GM12878 (cell line): ENCODE measurements at regions of chr11 and their contacts with region 1.

Region 1: DNA sequence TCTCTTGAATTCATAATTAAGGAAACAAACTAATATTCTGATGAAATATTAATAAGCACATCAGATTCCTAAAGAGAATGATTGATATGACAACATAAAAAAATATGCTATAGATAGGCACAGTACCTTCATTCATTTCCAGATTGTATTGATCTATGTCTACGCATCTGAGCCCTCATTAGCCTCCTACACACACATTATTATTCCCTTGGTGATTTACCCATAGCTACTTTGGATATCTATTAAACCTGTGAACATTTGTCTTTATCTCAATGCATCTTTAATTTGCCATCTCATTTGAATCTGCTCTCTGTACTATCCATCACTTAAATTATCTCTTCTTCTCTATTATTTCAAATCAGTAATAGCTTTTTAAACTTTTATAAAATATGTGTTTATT is 18.4 kb downstream of the SESN3 start:
- DNase-seq: no peak
- ATAC-seq: no peak
- H3K4me3 ChIP-seq: no peak overlapping the region
- H3K27ac ChIP-seq: no peak overlapping the region
- H3K4me1 ChIP-seq: no peaks in the 10 kb centered on the region
- H3K27me3 ChIP-seq: no peaks in the 10 kb centered on the region
- CTCF ChIP-seq: no peak
- EP300 ChIP-seq: no peak
- POLR2A ChIP-seq: no peak
- RAD21 ChIP-seq: no peak

Region 2: GRCh38 chr11:95128602-95129001 is 84.0 kb before region 1 on chr11:
- CTCF ChIA-PET with region 1: no interaction called
- POLR2A ChIA-PET with region 1: no interaction called
- RAD21 ChIA-PET with region 1: no interaction called
- SMC1A ChIA-PET with region 1: no interaction called
- in situ Hi-C with region 1: no loop called
- intact Hi-C with region 1: no loop called
- DNase-seq: no peak
- ATAC-seq: no peak
- H3K4me3 ChIP-seq: no peak overlapping the region
- H3K27ac ChIP-seq: no peak overlapping the region
- H3K4me1 ChIP-seq: no peaks in the 10 kb centered on the region
- H3K27me3 ChIP-seq: no peaks in the 10 kb centered on the region
- CTCF ChIP-seq: no peak
- EP300 ChIP-seq: no peak
- POLR2A ChIP-seq: no peak
- RAD21 ChIP-seq: no peak

Region 3: GRCh38 chr11:95200781-95201457 is 11.7 kb before region 1 on chr11:
- CTCF ChIA-PET with region 1: interaction called, 6 read pairs
- POLR2A ChIA-PET with region 1: interaction called, 4 read pairs
- RAD21 ChIA-PET with region 1: interaction called, 12 read pairs
- SMC1A ChIA-PET with region 1: interaction called, 64 read pairs
- in situ Hi-C with region 1: no loop called
- intact Hi-C with region 1: no loop called
- DNase-seq: no peak
- ATAC-seq: 0 out of 3 replicates have a peak, but pooled peaks have one; percentile 24
- H3K4me3 ChIP-seq: no peak overlapping the region
- H3K27ac ChIP-seq: no peak overlapping the region
- H3K4me1 ChIP-seq: no peaks in the 10 kb centered on the region
- H3K27me3 ChIP-seq: no peaks in the 10 kb centered on the region; a peak in 1 of 4 replicates
- CTCF ChIP-seq: no peak
- EP300 ChIP-seq: no peak
- POLR2A ChIP-seq: no peak
- RAD21 ChIP-seq: no peak

Region 4: GRCh38 chr11:95222817-95223216 is 10.2 kb after region 1 on chr11:
- CTCF ChIA-PET with region 1: interaction called, 5 read pairs
- POLR2A ChIA-PET with region 1: interaction called, 9 read pairs
- RAD21 ChIA-PET with region 1: no interaction called
- SMC1A ChIA-PET with region 1: interaction called, 14 read pairs
- in situ Hi-C with region 1: no loop called
- intact Hi-C with region 1: no loop called
- DNase-seq: no peak
- ATAC-seq: peak; percentile 37; the same call in 2 of the 3 replicates
- H3K4me3 ChIP-seq: no peak overlapping the region
- H3K27ac ChIP-seq: no peak overlapping the region
- H3K4me1 ChIP-seq: no peaks in the 10 kb centered on the region
- H3K27me3 ChIP-seq: no peaks in the 10 kb centered on the region; a peak in 1 of 4 replicates
- CTCF ChIP-seq: no peak
- EP300 ChIP-seq: no peak
- POLR2A ChIP-seq: no peak
- RAD21 ChIP-seq: no peak